B cell (primary cell): ENCODE measurements at regions of chr15 and their contacts with region 1.

Region 1: GRCh38 chr15:75008629-75009326 is 13.4 kb downstream of the SCAMP5 start:
- DNase-seq: peak; percentile 86
- ATAC-seq: peak; percentile 91
- H3K4me3 ChIP-seq: peak overlapping the region in 3 of 5 experiments; percentile 6 to 40 (median 13)
- H3K4me3 Mint-ChIP-seq: peak overlapping the region; percentile 75
- H3K27ac ChIP-seq: peak overlapping the region; percentile 40 to 54
- H3K27ac Mint-ChIP-seq: peak overlapping the region; percentile 92
- H3K4me1 ChIP-seq: peaks cover 38 to 44% of the 10 kb centered on the region in 2 donors
- H3K4me1 Mint-ChIP-seq: peaks cover 40% of the 10 kb centered on the region
- H3K27me3 ChIP-seq: peaks cover 0 to 61% (median 31%) of the 10 kb centered on the region in 4 experiments
- H3K27me3 Mint-ChIP-seq: peaks cover 30% of the 10 kb centered on the region
- CTCF ChIP-seq: no peak

Region 2: DNA sequence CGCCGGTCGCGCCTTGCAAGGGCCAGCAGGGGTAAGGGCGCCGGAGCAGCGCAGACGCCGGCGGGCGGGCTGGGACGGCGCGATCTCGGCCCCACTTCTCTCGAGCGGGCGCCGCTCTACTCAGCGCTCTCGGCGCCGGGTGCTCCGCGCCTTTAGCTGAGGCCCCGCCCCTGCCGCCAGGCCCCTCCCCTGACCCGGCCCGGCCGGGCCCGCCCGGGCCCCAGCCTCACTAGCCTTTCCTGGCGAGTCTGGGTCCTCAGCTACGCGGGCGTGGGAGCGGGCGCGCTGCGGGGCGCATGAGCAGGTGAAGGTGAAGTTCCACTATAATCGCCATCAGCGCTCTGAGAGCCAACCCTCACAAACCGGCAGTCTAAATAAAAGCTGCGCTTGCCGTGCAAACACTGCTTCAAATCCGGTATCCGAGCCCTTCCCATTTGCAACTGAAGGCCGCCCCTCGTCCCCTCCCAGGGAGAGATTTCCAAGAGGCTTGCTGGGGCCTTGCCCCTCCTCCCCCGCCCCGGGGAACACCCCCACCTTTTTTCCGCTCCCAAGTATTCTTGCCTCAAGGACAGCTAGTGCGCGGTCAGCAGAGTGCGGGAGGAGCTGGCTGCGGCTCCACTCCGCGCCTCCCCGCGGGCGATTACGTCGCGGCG is 52.0 kb before region 1 on chr15 and contains the start of gene RPP25:
- CTCF ChIA-PET with region 1: no interaction called
- POLR2A ChIA-PET with region 1: interaction called, 3 read pairs
- intact Hi-C with region 1: loop called (anchors 1 kb)
- DNase-seq: peak; percentile 84
- ATAC-seq: peak; percentile 91
- H3K4me3 ChIP-seq: peak within 1 kb of the TSS; percentile 39 to 80 (median 53)
- H3K4me3 Mint-ChIP-seq: peak within 1 kb of the TSS; percentile 85
- H3K27ac ChIP-seq: no peak within 1 kb of the TSS
- H3K27ac Mint-ChIP-seq: no peak within 1 kb of the TSS
- H3K4me1 ChIP-seq: peaks cover 38 to 40% of the 10 kb centered on the region in 2 donors
- H3K4me1 Mint-ChIP-seq: peaks cover 30% of the 10 kb centered on the region
- H3K27me3 ChIP-seq: peaks cover 0 to 64% (median 37%) of the 10 kb centered on the region in 4 experiments
- H3K27me3 Mint-ChIP-seq: peaks cover 43% of the 10 kb centered on the region
- CTCF ChIP-seq: no peak
- total RNA-seq, gene RPP25: 3.1 and 4.4 TPM in 2 replicates

Region 3: DNA sequence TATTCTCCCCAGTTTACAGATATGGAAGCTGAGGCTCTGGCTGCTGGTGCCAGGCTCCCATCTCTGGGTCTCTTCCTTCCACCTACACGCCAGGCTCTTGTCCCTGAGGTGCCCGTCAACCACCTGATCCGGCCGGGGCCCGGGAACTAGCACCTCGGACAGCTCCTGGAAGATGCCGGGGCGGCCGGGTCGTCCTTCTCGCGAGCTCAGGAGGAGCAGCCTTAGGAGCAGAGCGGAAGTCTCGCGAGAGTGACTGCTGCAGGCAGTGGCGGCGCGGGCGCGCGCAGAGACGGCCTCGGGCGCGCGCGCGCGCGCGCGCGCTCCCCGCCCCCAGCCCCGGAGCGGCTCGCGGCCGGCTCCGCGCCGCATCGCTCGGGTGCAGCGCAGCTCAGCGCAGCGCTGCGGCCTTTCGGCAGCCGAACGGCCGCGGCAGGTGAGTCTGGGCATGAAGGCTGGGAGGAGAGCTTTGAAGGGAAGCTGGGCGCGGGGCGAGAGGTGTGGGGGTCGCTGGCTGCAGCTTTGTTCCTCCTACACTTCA is 13.5 kb before region 1 on chr15 and contains the start of gene SCAMP5:
- CTCF ChIA-PET with region 1: no interaction called
- POLR2A ChIA-PET with region 1: no interaction called
- intact Hi-C with region 1: loop called (anchors 1 kb)
- DNase-seq: peak; percentile 87
- ATAC-seq: peak; percentile 94
- H3K4me3 ChIP-seq: peak within 1 kb of the TSS in 4 of 5 experiments; percentile 38 to 63 (median 50)
- H3K4me3 Mint-ChIP-seq: peak within 1 kb of the TSS; percentile 80
- H3K27ac ChIP-seq: no peak within 1 kb of the TSS
- H3K27ac Mint-ChIP-seq: peak within 1 kb of the TSS; percentile 28
- H3K4me1 ChIP-seq: peaks cover 19 to 23% of the 10 kb centered on the region in 2 donors
- H3K4me1 Mint-ChIP-seq: peaks cover 12% of the 10 kb centered on the region
- H3K27me3 ChIP-seq: peaks cover 0 to 68% (median 48%) of the 10 kb centered on the region in 4 experiments
- H3K27me3 Mint-ChIP-seq: peaks cover 68% of the 10 kb centered on the region
- CTCF ChIP-seq: no peak
- total RNA-seq, gene SCAMP5: 0.24 and 0.59 TPM in 2 replicates

Region 4: DNA sequence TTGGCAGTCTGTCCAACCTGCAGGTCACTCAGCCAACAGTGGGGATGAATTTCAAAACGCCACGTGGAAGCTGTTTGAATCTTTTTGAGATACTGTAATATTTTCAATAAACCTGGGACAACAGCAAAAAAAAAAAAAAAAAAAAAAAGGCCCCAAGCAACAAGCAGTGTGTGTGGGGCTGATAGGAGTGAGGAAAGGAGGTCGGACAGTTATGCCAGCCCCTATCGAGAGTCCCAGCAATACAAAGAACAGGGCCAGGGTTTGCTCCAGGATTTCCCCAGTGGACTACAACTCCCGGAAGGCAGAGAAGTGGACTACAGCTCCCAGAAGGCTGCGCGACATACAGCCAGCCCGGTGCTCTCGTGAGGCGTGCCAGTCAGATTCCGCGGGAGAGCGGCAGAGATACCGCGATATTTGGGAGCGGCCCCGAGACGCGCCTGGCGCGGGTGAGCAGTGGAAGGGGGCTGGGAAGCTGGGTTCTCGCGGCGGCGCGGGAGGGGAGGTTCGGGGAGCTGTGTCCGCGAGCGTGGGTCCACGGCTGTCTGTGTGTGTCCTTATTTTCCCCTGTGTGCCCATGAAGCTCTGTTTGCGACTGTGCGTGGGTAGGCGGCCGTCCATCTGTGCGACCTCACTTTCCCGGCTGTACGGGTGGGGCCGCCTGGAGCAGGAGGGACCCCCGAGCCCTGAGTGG is 14.5 kb after region 1 on chr15 and contains the start of gene PPCDC:
- CTCF ChIA-PET with region 1: interaction called, 5 read pairs
- POLR2A ChIA-PET with region 1: interaction called, 8 read pairs
- intact Hi-C with region 1: loop called (anchors 1 kb)
- DNase-seq: peak; percentile 93
- ATAC-seq: peak; percentile 100
- H3K4me3 ChIP-seq: peak within 1 kb of the TSS; percentile 72 to 96 (median 94)
- H3K4me3 Mint-ChIP-seq: peak within 1 kb of the TSS; percentile 97
- H3K27ac ChIP-seq: peak within 1 kb of the TSS; percentile 49 to 72
- H3K27ac Mint-ChIP-seq: peak within 1 kb of the TSS; percentile 94
- H3K4me1 ChIP-seq: peaks cover 5 to 18% of the 10 kb centered on the region in 2 donors
- H3K4me1 Mint-ChIP-seq: peaks cover 14% of the 10 kb centered on the region
- H3K27me3 ChIP-seq: peaks cover 0 to 33% (median 15%) of the 10 kb centered on the region in 4 experiments
- H3K27me3 Mint-ChIP-seq: peaks cover 23% of the 10 kb centered on the region
- CTCF ChIP-seq: no peak
- total RNA-seq, gene PPCDC: 14.8 and 15.1 TPM in 2 replicates